PC-9 (cell line): ENCODE measurements at regions of chr9 and their contacts with region 1.

Region 1: DNA sequence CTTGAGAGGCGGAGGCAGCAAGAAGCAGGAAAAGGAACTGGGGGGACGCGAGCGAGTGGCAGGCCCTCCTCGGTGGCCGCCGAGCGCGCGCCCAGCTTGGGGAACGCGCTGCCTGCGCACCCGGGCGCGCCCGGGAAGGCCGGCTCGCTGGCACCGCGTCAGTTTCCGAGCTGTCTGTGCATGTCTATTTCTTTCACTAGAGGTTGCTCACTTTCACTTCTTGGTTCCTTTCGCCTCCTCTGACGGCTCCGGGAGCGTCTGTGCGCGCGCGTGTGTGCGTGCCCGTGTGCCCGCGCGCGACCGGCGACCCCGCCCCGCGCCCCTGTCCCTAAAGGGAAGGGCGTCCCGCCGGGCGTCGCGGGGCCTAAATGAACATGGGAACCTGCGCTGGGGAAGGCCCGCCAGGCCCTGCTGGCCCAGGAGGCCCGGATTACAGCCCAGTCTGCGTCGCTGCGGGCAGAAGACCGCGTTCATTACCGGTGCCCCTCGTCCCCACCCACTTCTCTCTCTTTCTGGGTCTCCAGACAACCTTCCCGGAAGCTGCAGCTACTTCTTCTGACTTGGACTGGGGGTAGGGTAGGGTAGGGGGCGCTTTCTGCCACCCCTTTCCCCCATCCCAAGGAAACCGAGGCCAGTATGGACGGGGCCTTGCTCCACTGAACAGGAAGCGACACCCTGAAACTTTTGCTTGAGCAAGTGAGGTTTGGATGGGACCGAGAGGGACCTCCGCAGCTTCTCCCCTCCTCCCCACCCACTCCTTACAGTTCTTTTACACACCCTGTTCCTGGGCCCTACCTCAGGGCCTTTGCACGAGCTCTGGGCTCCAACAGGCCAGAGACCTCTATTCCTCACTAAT is 205.7 kb upstream of the IER5L start:
- DNase-seq: peak; percentile 50 to 68
- H3K4me3 ChIP-seq: peak overlapping the region; percentile 85
- H3K27ac ChIP-seq: peak overlapping the region; percentile 96
- H3K4me1 ChIP-seq: peaks cover 22% of the 10 kb centered on the region
- H3K27me3 ChIP-seq: no peaks in the 10 kb centered on the region
- CTCF ChIP-seq: no peak

Region 2: GRCh38 chr9:129278391-129279237 is 105.2 kb before region 1 on chr9:
- CTCF ChIA-PET with region 1: no interaction called
- POLR2A ChIA-PET with region 1: interaction called, 3 read pairs
- intact Hi-C with region 1: loop called (anchors 1 kb)
- DNase-seq: peak; percentile 86 to 97
- H3K4me3 ChIP-seq: peak overlapping the region; percentile 58; the same call in 1 of the 2 replicates
- H3K27ac ChIP-seq: peak overlapping the region; percentile 79
- H3K4me1 ChIP-seq: peaks cover 51% of the 10 kb centered on the region
- H3K27me3 ChIP-seq: no peaks in the 10 kb centered on the region
- CTCF ChIP-seq: no peak

Region 3: GRCh38 chr9:129348890-129349654 is 34.7 kb before region 1 on chr9:
- CTCF ChIA-PET with region 1: no interaction called
- POLR2A ChIA-PET with region 1: no interaction called
- intact Hi-C with region 1: no loop called
- DNase-seq: no peak
- H3K4me3 ChIP-seq: no peak overlapping the region
- H3K27ac ChIP-seq: no peak overlapping the region
- H3K4me1 ChIP-seq: peaks cover 13% of the 10 kb centered on the region
- H3K27me3 ChIP-seq: no peaks in the 10 kb centered on the region
- CTCF ChIP-seq: no peak

Region 4: GRCh38 chr9:129362287-129363000 is 21.3 kb before region 1 on chr9:
- CTCF ChIA-PET with region 1: no interaction called
- POLR2A ChIA-PET with region 1: interaction called, 9 read pairs
- intact Hi-C with region 1: loop called (anchors 1 kb)
- DNase-seq: peak; percentile 77 to 80
- H3K4me3 ChIP-seq: no peak overlapping the region
- H3K27ac ChIP-seq: no peak overlapping the region
- H3K4me1 ChIP-seq: peaks cover 25% of the 10 kb centered on the region
- H3K27me3 ChIP-seq: no peaks in the 10 kb centered on the region
- CTCF ChIP-seq: peak; percentile 50

Region 5: GRCh38 chr9:129413537-129414376 is 30.0 kb after region 1 on chr9:
- CTCF ChIA-PET with region 1: no interaction called
- POLR2A ChIA-PET with region 1: no interaction called
- intact Hi-C with region 1: loop called (anchors 1 kb)
- DNase-seq: peak; percentile 87 to 99
- H3K4me3 ChIP-seq: peak overlapping the region; percentile 77
- H3K27ac ChIP-seq: peak overlapping the region; percentile 85
- H3K4me1 ChIP-seq: peaks cover 24% of the 10 kb centered on the region
- H3K27me3 ChIP-seq: no peaks in the 10 kb centered on the region
- CTCF ChIP-seq: no peak

Region 6: GRCh38 chr9:129460323-129461261 is 76.8 kb after region 1 on chr9:
- CTCF ChIA-PET with region 1: no interaction called
- POLR2A ChIA-PET with region 1: interaction called, 10 read pairs
- intact Hi-C with region 1: loop called (anchors 1 kb)
- DNase-seq: peak; percentile 85 to 94
- H3K4me3 ChIP-seq: peak overlapping the region; percentile 64
- H3K27ac ChIP-seq: peak overlapping the region; percentile 89
- H3K4me1 ChIP-seq: peaks cover 47% of the 10 kb centered on the region
- H3K27me3 ChIP-seq: no peaks in the 10 kb centered on the region
- CTCF ChIP-seq: no peak

Region 7: DNA sequence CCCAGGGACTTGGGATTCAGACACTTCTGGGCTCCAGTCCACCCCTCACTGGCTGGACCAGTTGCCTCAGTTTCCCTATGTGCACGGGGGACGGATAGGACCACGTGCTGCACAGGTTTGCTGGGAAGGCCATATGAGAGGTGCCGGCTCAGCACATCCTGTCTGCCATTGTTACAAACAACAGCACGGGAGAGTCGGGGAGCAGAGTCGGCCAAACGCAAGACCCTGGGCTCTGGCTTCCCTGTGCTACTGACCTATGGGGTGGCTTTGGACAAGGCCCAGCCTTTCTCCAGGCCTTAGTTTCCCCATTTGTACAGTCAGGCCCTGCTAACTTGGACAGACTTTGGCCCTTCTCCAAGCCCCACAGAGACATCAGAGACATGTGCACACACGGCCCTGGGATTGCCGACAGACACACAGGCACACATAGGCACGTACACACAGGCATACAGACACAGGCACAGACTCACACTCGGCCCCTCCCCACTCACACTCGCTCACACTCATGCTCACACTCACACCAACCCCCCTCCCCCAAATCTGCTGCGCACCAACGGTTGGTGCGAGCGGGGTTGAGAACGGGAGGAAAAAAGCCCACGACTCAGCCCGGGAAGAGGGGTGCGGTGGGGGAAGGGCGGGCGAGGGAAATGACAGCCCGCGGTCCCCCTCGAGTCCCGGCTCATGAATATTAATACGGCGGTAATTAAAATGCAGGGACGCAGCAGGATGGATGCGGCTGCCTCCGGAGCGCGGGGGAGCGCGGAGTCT is 104.0 kb after region 1 on chr9:
- CTCF ChIA-PET with region 1: interaction called, 9 read pairs
- POLR2A ChIA-PET with region 1: interaction called, 20 read pairs
- intact Hi-C with region 1: no loop called
- DNase-seq: no peak
- H3K4me3 ChIP-seq: peak overlapping the region; percentile 66
- H3K27ac ChIP-seq: peak overlapping the region; percentile 91
- H3K4me1 ChIP-seq: peaks cover 72% of the 10 kb centered on the region
- H3K27me3 ChIP-seq: no peaks in the 10 kb centered on the region
- CTCF ChIP-seq: no peak